ENCODE measurements at regions of chr5 and their contacts with region 1.

Region 1: DNA sequence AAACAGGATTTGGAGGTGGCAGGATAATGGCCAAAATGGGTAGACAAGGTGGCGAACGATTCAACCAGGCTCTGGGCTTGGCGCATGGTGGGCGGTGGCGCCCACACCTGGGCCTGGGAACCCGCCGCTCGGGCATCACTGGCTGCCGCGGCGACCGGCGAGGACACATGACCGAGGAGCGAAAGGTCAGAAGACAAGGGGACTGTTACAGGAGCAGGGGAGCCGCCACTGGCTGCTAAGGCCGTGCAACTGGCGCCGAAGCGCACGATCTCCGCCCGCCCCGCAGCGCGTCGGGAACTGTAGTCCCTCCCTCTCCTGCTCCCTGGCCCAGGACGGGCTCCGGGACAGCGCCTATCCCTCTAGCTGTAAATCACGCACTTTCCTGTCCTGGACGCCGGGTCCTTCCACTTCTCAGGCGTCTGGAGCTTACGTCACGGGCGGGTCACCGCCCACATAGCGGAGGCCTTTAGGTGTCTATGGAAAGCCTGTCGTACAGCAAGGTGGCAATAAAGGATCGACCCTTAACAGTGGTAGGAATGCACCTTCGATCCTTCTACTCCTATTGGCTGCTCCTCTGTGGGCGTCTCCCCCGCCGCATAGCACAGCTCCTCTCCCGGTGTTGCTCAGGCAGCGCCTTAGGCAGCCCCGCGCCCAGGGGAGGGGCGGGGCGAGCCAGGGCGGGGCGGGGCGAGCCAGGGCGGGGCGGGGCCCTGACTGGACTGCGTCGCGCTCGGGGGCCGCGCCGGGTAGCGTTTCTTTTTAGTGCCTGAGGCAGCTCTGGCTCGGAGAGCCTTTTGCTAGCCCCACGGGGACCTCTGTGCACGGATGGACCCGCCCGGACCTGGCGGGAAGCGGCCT is at the start of gene ICE1:
- DNase-seq: peak; percentile 89 to 99 (median 96)
- ATAC-seq: peak; percentile 93
- H3K4me3 ChIP-seq: peak within 1 kb of the TSS; percentile 84
- H3K4me3 Mint-ChIP-seq: peak within 1 kb of the TSS in 7 of 10 donors; percentile 88 to 96 (median 93)
- H3K27ac ChIP-seq: peak within 1 kb of the TSS; percentile 90
- H3K27ac Mint-ChIP-seq: peak within 1 kb of the TSS in 7 of 9 donors; percentile 92 to 99 (median 97)
- H3K4me1 ChIP-seq: peaks cover 33 to 35% of the 10 kb centered on the region in 2 donors
- H3K4me1 Mint-ChIP-seq: peaks cover 6 to 24% (median 16%) of the 10 kb centered on the region in 7 donors
- H3K27me3 ChIP-seq: no peaks in the 10 kb centered on the region
- H3K27me3 Mint-ChIP-seq: no peaks in the 10 kb centered on the region
- total RNA-seq, gene ICE1: 30.2 to 47.6 (median 35.8) TPM

Region 2: GRCh38 chr5:5141625-5142532 is 280.3 kb before region 1 on chr5:
- CTCF ChIA-PET with region 1: interaction called, 4 read pairs
- POLR2A ChIA-PET with region 1: no interaction called
- intact Hi-C with region 1: loop called in 1 of 2 experiments (anchors 1 kb)
- DNase-seq: peak in 7 of 9 donors; percentile 3 to 55 (median 38)
- ATAC-seq: no peak
- H3K4me3 ChIP-seq: no peak overlapping the region
- H3K4me3 Mint-ChIP-seq: no peak overlapping the region
- H3K27ac ChIP-seq: no peak overlapping the region
- H3K27ac Mint-ChIP-seq: no peak overlapping the region
- H3K4me1 ChIP-seq: no peaks in the 10 kb centered on the region
- H3K4me1 Mint-ChIP-seq: peaks cover 0 to 14% (median 9%) of the 10 kb centered on the region in 7 donors
- H3K27me3 ChIP-seq: peaks cover 0 to 9% of the 10 kb centered on the region in 2 donors
- H3K27me3 Mint-ChIP-seq: peaks cover 21 to 35% (median 29%) of the 10 kb centered on the region in 5 donors

Region 3: GRCh38 chr5:5481206-5481605 is 59.0 kb after region 1 on chr5:
- CTCF ChIA-PET with region 1: no interaction called
- POLR2A ChIA-PET with region 1: interaction called, 3 read pairs
- intact Hi-C with region 1: loop called (anchors 1 kb)
- DNase-seq: peak in 6 of 9 donors; percentile 32 to 59 (median 44)
- ATAC-seq: peak; percentile 85
- H3K4me3 ChIP-seq: no peak overlapping the region
- H3K4me3 Mint-ChIP-seq: peak overlapping the region in 9 of 10 donors; percentile 29 to 78 (median 53)
- H3K27ac ChIP-seq: peak overlapping the region; percentile 28
- H3K27ac Mint-ChIP-seq: peak overlapping the region; percentile 59 to 92 (median 80)
- H3K4me1 ChIP-seq: peaks cover 7 to 13% of the 10 kb centered on the region in 2 donors
- H3K4me1 Mint-ChIP-seq: peaks cover 14 to 40% (median 26%) of the 10 kb centered on the region in 7 donors
- H3K27me3 ChIP-seq: no peaks in the 10 kb centered on the region
- H3K27me3 Mint-ChIP-seq: no peaks in the 10 kb centered on the region

Region 4: GRCh38 chr5:5523066-5523505 is 100.9 kb after region 1 on chr5:
- CTCF ChIA-PET with region 1: no interaction called
- POLR2A ChIA-PET with region 1: no interaction called
- intact Hi-C with region 1: loop called (anchors 1 kb)
- DNase-seq: peak in 7 of 9 donors; percentile 31 to 58 (median 50)
- ATAC-seq: peak; percentile 75
- H3K4me3 ChIP-seq: peak overlapping the region; percentile 48
- H3K4me3 Mint-ChIP-seq: peak overlapping the region in 9 of 10 donors; percentile 43 to 83 (median 70)
- H3K27ac ChIP-seq: no peak overlapping the region
- H3K27ac Mint-ChIP-seq: peak overlapping the region; percentile 0 to 90 (median 75)
- H3K4me1 ChIP-seq: peaks cover 0 to 3% of the 10 kb centered on the region in 2 donors
- H3K4me1 Mint-ChIP-seq: peaks cover 1 to 25% (median 17%) of the 10 kb centered on the region in 7 donors
- H3K27me3 ChIP-seq: no peaks in the 10 kb centered on the region
- H3K27me3 Mint-ChIP-seq: peaks cover 0 to 3% (median 0%) of the 10 kb centered on the region in 5 donors

Region 5: GRCh38 chr5:5777013-5777412 is 354.8 kb after region 1 on chr5:
- CTCF ChIA-PET with region 1: no interaction called
- POLR2A ChIA-PET with region 1: no interaction called
- intact Hi-C with region 1: no loop called
- DNase-seq: no peak
- ATAC-seq: no peak
- H3K4me3 ChIP-seq: no peak overlapping the region
- H3K4me3 Mint-ChIP-seq: no peak overlapping the region
- H3K27ac ChIP-seq: no peak overlapping the region
- H3K27ac Mint-ChIP-seq: no peak overlapping the region
- H3K4me1 ChIP-seq: no peaks in the 10 kb centered on the region
- H3K4me1 Mint-ChIP-seq: no peaks in the 10 kb centered on the region
- H3K27me3 ChIP-seq: no peaks in the 10 kb centered on the region
- H3K27me3 Mint-ChIP-seq: peaks cover 2 to 23% (median 16%) of the 10 kb centered on the region in 5 donors

Region 6: GRCh38 chr5:5787373-5787772 is 365.2 kb after region 1 on chr5:
- CTCF ChIA-PET with region 1: no interaction called
- POLR2A ChIA-PET with region 1: no interaction called
- intact Hi-C with region 1: no loop called
- DNase-seq: no peak
- ATAC-seq: no peak
- H3K4me3 ChIP-seq: no peak overlapping the region
- H3K4me3 Mint-ChIP-seq: no peak overlapping the region
- H3K27ac ChIP-seq: no peak overlapping the region
- H3K27ac Mint-ChIP-seq: no peak overlapping the region
- H3K4me1 ChIP-seq: no peaks in the 10 kb centered on the region
- H3K4me1 Mint-ChIP-seq: no peaks in the 10 kb centered on the region
- H3K27me3 ChIP-seq: no peaks in the 10 kb centered on the region
- H3K27me3 Mint-ChIP-seq: peaks cover 0 to 7% (median 4%) of the 10 kb centered on the region in 5 donors

Measured in naive thymus-derived CD4-positive, alpha-beta T cell (primary cell).